ENCODE measurements at regions of chr5 and their contacts with region 1.

Region 1: GRCh38 chr5:81425569-81425968 is 31.6 kb upstream of the ACOT12 start:
- DNase-seq: no peak
- H3K4me3 Mint-ChIP-seq: no peak overlapping the region
- H3K27ac Mint-ChIP-seq: no peak overlapping the region
- H3K4me1 Mint-ChIP-seq: peaks cover 8% of the 10 kb centered on the region
- H3K27me3 Mint-ChIP-seq: no peaks in the 10 kb centered on the region

Region 2: GRCh38 chr5:81718300-81718699 is 292.7 kb after region 1 on chr5:
- CTCF ChIA-PET with region 1: no interaction called
- POLR2A ChIA-PET with region 1: no interaction called
- intact Hi-C with region 1: loop called (anchors 10 kb)
- DNase-seq: no peak
- H3K4me3 Mint-ChIP-seq: peak overlapping the region; percentile 25
- H3K27ac Mint-ChIP-seq: no peak overlapping the region
- H3K4me1 Mint-ChIP-seq: peaks cover 44% of the 10 kb centered on the region
- H3K27me3 Mint-ChIP-seq: no peaks in the 10 kb centered on the region

Region 3: GRCh38 chr5:81838307-81838906 is 412.8 kb after region 1 on chr5:
- CTCF ChIA-PET with region 1: interaction called, 5 read pairs
- POLR2A ChIA-PET with region 1: no interaction called
- intact Hi-C with region 1: loop called (anchors 1 kb)
- DNase-seq: peak; percentile 29
- H3K4me3 Mint-ChIP-seq: no peak overlapping the region
- H3K27ac Mint-ChIP-seq: no peak overlapping the region
- H3K4me1 Mint-ChIP-seq: peaks cover 5% of the 10 kb centered on the region
- H3K27me3 Mint-ChIP-seq: no peaks in the 10 kb centered on the region

Region 4: GRCh38 chr5:81851481-81852178 is 426.1 kb after region 1 on chr5:
- CTCF ChIA-PET with region 1: interaction called, 6 read pairs
- POLR2A ChIA-PET with region 1: no interaction called
- intact Hi-C with region 1: loop called (anchors 5 kb)
- DNase-seq: peak; percentile 93
- H3K4me3 Mint-ChIP-seq: peak overlapping the region; percentile 89
- H3K27ac Mint-ChIP-seq: peak overlapping the region; percentile 92
- H3K4me1 Mint-ChIP-seq: peaks cover 28% of the 10 kb centered on the region
- H3K27me3 Mint-ChIP-seq: no peaks in the 10 kb centered on the region

Region 5: DNA sequence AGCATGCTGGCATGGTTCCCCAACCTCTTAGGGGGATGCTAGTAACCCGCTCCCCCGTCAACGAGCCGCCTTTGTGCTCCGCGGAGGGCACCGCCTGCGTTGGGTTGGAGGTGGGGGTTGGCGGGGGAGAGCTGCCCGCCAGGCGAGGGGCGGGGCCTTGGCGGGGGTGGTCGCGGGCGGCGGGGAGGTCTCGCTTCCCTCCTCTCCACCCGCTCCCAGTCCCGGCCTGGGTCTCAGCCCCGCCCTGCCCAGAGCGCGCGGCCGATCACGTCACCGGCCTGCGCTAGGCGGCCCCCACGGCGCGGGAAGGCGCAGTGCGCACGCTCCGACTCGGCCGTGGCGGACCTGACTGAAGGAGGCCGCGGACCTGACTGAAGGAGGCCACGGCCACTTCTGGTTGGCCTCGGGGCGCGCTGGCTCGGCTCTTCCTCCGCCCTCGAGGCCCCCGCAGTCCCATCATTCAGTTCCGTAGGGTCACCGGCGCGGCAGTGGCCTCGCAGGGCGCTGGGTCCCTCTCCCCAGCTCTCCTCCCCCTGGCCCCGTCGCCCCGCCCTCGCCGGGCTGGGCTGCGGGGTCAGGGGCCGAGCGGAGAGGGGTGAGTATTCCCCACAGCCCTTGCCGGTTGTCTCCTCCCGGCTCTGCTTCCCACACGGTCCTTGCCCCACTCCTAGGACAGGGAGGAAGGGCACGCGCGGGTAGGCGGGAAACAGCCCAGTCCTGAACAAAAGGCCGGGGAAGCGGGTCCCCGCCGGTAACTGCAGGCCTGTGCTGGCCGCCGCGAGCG is 546.3 kb after region 1 on chr5 and contains the start of gene ATG10:
- CTCF ChIA-PET with region 1: no interaction called
- POLR2A ChIA-PET with region 1: no interaction called
- intact Hi-C with region 1: loop called (anchors 5 kb)
- DNase-seq: peak; percentile 91
- H3K4me3 Mint-ChIP-seq: peak within 1 kb of the TSS; percentile 87
- H3K27ac Mint-ChIP-seq: peak within 1 kb of the TSS; percentile 98
- H3K4me1 Mint-ChIP-seq: peaks cover 20% of the 10 kb centered on the region
- H3K27me3 Mint-ChIP-seq: no peaks in the 10 kb centered on the region
- total RNA-seq, gene ATG10: 8.5 to 9.7 TPM

Region 6: GRCh38 chr5:82165740-82166530 is 740.4 kb after region 1 on chr5:
- CTCF ChIA-PET with region 1: interaction called, 15 read pairs
- POLR2A ChIA-PET with region 1: no interaction called
- intact Hi-C with region 1: loop called (anchors 1 kb)
- DNase-seq: peak; percentile 30
- H3K4me3 Mint-ChIP-seq: no peak overlapping the region
- H3K27ac Mint-ChIP-seq: no peak overlapping the region
- H3K4me1 Mint-ChIP-seq: peaks cover 6% of the 10 kb centered on the region
- H3K27me3 Mint-ChIP-seq: no peaks in the 10 kb centered on the region

Region 7: DNA sequence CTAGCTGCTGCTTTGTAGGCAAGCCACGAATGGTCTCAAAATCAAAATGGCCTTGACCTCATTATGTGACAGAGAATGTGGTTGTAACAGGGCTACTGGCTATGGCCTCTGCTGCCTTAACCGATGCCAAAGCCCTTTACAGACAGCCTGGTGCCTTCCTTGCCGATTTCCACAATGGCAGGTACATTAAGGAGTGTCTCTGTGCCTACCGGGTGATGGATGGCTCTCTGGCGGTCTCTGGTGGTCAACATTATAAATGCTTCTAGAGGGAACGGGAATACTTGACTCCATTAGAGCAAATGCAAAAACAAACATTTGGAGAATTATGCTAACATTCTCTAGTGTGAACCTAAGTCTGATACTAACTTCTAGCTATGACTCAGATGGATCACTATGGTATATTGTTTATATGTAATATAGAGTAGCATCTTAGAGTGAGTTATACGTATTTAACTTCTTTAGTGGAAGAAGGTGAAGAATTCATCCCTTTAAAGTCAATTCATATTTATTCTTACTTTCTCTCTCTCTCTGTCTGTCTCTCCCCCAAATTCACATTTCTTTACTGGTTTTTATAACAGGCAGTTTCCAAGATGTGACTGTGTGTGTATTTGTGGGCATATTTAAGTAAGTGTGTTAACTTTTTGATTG is 800.1 kb after region 1 on chr5:
- CTCF ChIA-PET with region 1: interaction called, 11 read pairs
- POLR2A ChIA-PET with region 1: no interaction called
- intact Hi-C with region 1: loop called (anchors 1 kb)
- DNase-seq: peak; percentile 71
- H3K4me3 Mint-ChIP-seq: no peak overlapping the region
- H3K27ac Mint-ChIP-seq: no peak overlapping the region
- H3K4me1 Mint-ChIP-seq: peaks cover 2% of the 10 kb centered on the region
- H3K27me3 Mint-ChIP-seq: no peaks in the 10 kb centered on the region